Cardiac septum (tissue), 1 donor: ENCODE measurements at regions of chr16 and their contacts with region 1.

Region 1: DNA sequence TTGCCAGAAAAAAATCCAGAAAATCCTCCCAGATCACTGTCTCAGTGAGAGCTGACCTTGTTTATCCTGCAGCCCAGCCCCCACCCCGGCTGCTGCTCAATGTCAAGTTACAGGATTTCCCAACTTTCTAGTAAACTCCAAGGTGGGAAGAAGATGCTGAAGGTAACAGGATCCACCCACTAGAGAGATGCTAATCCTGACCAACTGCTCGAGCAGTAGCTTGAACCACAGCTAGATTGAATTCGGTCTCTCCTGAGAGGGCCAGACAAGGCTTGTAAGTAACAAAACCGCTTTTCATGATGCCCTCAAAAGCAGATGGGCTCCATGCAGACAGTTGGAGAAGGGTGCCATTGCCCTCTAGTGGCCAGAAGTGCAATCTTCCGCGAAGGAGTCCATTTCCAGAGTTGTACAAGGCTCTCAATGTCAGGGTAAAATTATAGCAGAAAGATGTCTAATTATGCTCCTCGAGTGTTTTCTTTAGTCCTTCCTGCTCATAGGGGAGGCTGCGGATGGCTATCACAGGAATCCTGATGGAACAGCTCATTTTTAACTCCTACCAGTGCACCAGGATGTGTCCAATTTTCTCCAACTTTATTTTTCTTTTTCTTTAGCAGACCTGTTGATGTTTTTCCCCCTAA is 3.9 kb downstream of the CDH11 start:
- DNase-seq: no peak

Region 2: DNA sequence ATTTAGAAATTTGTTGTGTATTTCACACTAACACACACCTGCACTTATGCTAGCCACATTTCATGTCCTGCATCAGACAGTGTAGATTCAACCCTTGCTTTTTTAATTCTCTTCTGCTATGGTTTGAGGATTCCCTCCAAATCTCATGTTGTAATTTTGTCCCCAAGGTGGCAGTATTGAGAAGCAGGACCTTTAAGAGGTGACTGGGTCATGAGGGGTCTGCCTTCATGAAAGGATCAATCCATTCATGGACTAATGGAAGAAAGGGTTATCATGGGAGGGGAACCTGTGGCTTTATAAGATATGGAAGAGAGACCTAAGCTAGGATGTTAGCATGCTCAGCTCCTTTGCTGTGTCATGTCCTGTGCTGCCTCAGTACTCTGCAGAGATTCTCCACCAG is 1028.2 kb before region 1 on chr16:
- intact Hi-C with region 1: loop called (anchors 5 kb)
- DNase-seq: no peak

Region 3: GRCh38 chr16:64718486-64718885 is 399.4 kb before region 1 on chr16:
- intact Hi-C with region 1: no loop called
- DNase-seq: no peak

Region 4: GRCh38 chr16:65070831-65071432 is 47.0 kb before region 1 on chr16:
- intact Hi-C with region 1: loop called (anchors 5 kb)
- DNase-seq: no peak

Region 5: DNA sequence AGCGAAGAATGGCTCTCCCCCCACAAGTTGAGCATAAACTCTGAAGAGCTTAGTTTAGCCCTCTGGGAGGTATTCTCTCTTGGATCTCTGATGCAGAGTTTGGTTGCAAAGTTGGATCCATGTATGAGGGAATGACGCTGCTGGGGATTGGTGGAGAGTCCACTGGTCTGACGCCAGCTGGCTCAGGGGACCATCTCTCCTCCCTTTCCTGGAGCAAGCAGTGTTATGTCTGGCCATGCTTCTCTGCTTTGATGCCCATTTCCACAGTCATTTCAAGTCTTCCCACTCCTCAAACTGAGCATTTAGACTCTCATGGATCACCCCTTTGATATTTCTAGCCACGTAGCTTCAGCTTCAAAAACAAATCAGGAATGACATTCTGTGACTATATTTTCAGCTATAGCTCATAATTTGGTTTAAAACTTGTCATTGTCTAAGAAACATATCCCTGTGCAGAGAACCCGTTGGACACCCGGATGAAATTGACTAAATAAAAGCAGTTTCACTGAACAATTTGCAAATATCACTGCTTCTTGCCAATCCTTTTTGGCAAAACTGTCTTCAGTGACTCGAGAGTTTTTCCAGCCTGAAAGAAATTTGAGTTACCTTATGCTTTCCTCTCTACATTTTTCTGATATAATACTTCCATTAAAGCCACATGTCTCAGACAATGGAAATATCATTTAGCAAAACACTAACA is 197.3 kb after region 1 on chr16:
- intact Hi-C with region 1: loop called (anchors 5 kb)
- DNase-seq: no peak

Region 6: GRCh38 chr16:66247516-66248481 is 1129.9 kb after region 1 on chr16:
- intact Hi-C with region 1: loop called (anchors 10 kb)
- DNase-seq: peak; percentile 80